ENCODE measurements at regions of chr18 and their contacts with region 1.

Region 1: DNA sequence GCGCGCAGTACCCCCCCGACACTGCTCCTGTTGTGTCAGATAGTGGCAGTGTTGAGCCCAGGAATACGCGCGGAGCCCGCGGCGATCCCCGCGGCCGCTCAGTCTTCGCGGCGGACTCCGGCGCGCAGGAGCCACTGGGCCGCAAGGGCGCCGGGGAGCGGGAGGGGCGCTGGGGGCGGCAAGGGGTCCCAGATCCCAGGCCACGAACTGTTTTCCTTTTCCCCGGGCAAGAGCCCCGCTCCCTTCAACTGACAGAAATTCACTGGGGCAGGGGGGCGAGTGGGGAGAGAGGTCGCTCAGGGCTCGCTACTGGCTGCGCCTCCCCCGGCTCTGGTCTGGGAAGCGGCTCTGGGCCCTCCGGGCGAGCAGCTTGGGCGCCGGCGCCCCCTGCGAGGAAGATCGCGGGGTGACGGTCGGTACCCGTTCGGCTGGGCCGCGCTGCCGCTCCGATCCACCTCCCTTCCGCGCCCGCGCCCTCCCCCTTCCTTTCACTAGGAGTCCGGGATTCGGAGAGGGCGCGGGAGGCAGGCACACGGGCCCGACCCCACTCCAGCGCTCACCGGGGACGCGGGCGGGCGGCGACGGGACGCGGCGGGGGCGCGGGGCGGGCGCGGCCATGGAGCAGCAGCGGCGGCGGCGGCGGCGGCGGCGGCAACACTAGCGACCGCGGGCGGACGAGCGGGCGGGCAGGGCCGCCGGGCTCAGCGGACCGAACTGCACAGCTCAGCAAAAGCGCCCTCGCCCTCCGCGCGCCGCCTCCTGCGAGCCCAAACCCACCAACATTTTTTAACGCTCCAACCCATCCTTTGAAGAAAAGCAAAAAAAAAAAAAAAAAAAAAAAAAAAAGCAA is 1.4 kb upstream of the SETBP1 start:
- DNase-seq: peak; percentile 84
- H3K4me3 Mint-ChIP-seq: peak overlapping the region; percentile 73
- H3K27ac Mint-ChIP-seq: no peak overlapping the region
- H3K4me1 Mint-ChIP-seq: no peaks in the 10 kb centered on the region
- H3K27me3 Mint-ChIP-seq: no peaks in the 10 kb centered on the region
- CTCF ChIP-seq: peak; percentile 58

Region 2: DNA sequence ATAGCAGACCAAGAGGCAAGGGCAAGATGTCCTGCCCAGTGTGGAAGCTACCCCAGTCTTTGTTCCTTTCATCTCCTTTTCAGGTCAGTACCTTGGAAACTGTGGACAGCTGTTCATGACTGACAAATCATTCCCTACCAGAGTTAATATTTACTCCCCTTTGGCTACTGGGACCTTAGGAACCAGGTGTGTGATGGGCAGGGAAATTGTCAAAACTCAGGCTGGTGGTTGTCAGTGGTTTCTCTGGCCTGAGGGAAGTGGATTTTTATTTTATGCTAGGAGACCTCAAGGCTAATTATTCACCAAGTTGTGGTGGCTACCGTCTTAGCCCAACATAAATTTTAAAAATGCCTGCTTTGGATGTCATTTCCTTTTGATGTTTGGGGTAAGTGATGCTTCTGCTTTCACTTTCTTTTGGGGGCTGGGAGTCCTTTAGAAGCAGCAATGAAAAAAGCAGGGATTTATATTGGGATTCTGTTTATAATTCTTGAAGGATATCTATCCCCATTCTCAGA is 120.7 kb after region 1 on chr18:
- CTCF ChIA-PET with region 1: no interaction called
- intact Hi-C with region 1: loop called (anchors 10 kb)
- DNase-seq: no peak
- H3K4me3 Mint-ChIP-seq: no peak overlapping the region
- H3K27ac Mint-ChIP-seq: no peak overlapping the region
- H3K4me1 Mint-ChIP-seq: peaks cover 30% of the 10 kb centered on the region
- H3K27me3 Mint-ChIP-seq: no peaks in the 10 kb centered on the region
- CTCF ChIP-seq: no peak

Region 3: DNA sequence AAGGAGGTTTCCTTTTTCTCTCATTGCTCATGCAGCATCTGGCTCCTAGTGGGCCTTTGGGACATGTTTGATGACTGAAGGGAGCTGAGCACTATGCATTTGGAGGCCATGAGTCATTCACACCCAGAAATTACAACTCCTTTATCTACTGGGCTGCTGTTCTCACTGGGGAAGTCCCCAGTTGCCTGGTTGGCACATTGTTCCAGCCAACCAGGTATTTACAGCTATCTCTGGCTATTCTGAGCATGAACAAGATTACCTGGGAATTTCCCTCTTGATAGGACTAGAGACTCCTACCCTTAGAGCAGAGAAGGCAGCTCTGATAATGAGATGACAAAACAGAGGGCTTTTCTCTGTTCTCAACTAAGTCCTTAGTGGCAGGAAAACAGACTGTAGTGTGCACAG is 207.9 kb after region 1 on chr18:
- CTCF ChIA-PET with region 1: interaction called, 5 read pairs
- intact Hi-C with region 1: loop called (anchors 2 kb)
- DNase-seq: peak; percentile 60
- H3K4me3 Mint-ChIP-seq: no peak overlapping the region
- H3K27ac Mint-ChIP-seq: peak overlapping the region; percentile 8
- H3K4me1 Mint-ChIP-seq: peaks cover 12% of the 10 kb centered on the region
- H3K27me3 Mint-ChIP-seq: no peaks in the 10 kb centered on the region
- CTCF ChIP-seq: no peak

Region 4: GRCh38 chr18:44909191-44909719 is 230.0 kb after region 1 on chr18:
- CTCF ChIA-PET with region 1: no interaction called
- intact Hi-C with region 1: no loop called
- DNase-seq: no peak
- H3K4me3 Mint-ChIP-seq: no peak overlapping the region
- H3K27ac Mint-ChIP-seq: no peak overlapping the region
- H3K4me1 Mint-ChIP-seq: no peaks in the 10 kb centered on the region
- H3K27me3 Mint-ChIP-seq: no peaks in the 10 kb centered on the region
- CTCF ChIP-seq: no peak

Region 5: DNA sequence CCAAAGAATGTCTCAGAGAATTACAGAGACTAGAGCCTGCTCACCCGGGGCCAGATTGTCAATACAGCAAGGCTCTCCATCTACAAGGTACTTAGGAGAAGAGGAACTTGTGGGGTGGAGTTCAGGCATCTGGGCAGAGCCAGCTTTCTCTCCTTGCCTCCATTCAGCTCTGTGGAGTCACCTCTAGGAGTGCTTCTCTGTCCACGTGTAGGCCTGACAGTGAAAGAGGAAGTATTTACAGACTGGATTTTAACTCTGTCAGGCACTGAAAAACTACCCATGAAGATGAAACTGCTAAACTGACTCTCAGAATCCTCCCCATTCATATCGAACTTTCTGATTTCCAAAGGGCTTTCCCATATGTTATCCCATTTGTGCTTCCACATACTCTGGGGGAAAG is 317.0 kb after region 1 on chr18:
- CTCF ChIA-PET with region 1: no interaction called
- intact Hi-C with region 1: no loop called
- DNase-seq: no peak
- H3K4me3 Mint-ChIP-seq: no peak overlapping the region
- H3K27ac Mint-ChIP-seq: no peak overlapping the region
- H3K4me1 Mint-ChIP-seq: no peaks in the 10 kb centered on the region
- H3K27me3 Mint-ChIP-seq: no peaks in the 10 kb centered on the region
- CTCF ChIP-seq: no peak

Region 6: GRCh38 chr18:45384137-45384961 is 705.1 kb after region 1 on chr18:
- CTCF ChIA-PET with region 1: no interaction called
- intact Hi-C with region 1: loop called (anchors 10 kb)
- DNase-seq: peak; percentile 71
- H3K4me3 Mint-ChIP-seq: no peak overlapping the region
- H3K27ac Mint-ChIP-seq: no peak overlapping the region
- H3K4me1 Mint-ChIP-seq: no peaks in the 10 kb centered on the region
- H3K27me3 Mint-ChIP-seq: no peaks in the 10 kb centered on the region
- CTCF ChIP-seq: peak; percentile 89

Measured in Calu3 (cell line).